MCF 10A (cell line): ENCODE measurements at regions of chr19 and their contacts with region 1.

Region 1: DNA sequence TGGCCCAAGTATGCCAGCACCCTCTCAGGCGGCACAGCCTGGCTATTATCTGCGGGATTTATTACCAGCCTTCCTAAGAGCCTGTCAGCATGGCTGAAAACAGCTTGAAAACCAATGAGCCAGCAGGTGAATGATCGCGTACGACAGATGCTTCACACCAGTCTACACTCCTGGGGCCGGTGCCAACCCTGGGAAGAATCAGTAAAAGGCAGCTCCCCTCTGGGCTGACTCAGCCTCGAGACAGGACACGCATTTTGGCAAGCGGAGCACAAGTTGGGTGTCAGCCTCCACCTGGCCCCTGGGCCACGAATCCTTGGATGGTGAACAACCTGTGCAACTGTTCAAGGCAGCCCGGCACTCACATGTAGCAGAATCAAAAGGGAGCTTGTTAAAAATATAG is 15.6 kb downstream of the EMP3 start:
- DNase-seq: peak; percentile 99
- H3K4me3 Mint-ChIP-seq: no peak overlapping the region
- H3K27ac Mint-ChIP-seq: no peak overlapping the region
- H3K4me1 Mint-ChIP-seq: peaks cover 15% of the 10 kb centered on the region
- H3K27me3 Mint-ChIP-seq: no peaks in the 10 kb centered on the region
- CTCF ChIP-seq: no peak

Region 2: GRCh38 chr19:48321622-48322591 is 19.1 kb before region 1 on chr19:
- CTCF ChIA-PET with region 1: interaction called, 7 read pairs
- POLR2A ChIA-PET with region 1: interaction called, 14 read pairs
- intact Hi-C with region 1: no loop called
- DNase-seq: peak; percentile 99
- H3K4me3 Mint-ChIP-seq: peak overlapping the region; percentile 95
- H3K27ac Mint-ChIP-seq: peak overlapping the region; percentile 97
- H3K4me1 Mint-ChIP-seq: peaks cover 43% of the 10 kb centered on the region
- H3K27me3 Mint-ChIP-seq: no peaks in the 10 kb centered on the region
- CTCF ChIP-seq: no peak

Region 3: DNA sequence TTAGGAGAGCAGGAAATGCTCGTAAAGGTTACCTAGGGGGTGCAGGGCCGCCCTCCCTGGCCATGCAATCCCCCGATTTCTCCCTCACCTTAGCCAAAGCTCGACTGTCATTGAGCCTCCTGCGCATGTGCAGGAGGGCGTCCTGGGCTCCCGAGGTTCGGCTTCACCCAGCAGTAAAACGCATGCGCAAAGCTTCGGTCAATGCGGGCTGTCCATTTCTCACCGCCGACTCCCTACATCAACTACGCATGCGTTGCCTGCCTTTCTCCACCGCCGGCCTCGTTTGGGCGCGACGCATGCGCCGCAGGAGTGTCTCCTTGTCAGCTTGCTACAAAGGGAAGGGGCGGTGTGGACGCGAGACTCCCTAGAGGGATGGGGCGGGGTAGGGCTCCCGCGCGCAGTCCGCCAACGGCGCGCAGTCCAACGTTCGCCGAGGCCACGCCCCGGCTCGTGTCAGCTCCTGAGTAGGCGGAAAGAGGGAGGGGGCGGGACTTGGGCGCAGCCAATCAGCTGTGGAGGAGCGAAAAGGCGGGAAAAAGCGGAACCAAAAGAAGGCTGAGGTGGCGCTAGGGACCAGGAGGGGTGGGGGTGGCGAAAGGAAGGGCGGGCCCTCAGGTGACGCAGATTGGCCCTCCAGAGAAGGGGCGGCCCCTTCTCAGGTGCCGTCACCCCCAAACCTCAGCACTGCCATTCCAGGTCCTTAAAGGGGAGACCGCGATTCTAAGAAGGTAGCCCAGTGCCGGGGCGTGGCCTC is 23.0 kb after region 1 on chr19 and contains the starts of genes SYNGR4 and TMEM143:
- CTCF ChIA-PET with region 1: interaction called, 3 read pairs
- POLR2A ChIA-PET with region 1: interaction called, 11 read pairs
- intact Hi-C with region 1: no loop called
- DNase-seq: peak; percentile 100
- H3K4me3 Mint-ChIP-seq: peak within 1 kb of the TSS; percentile 79
- H3K27ac Mint-ChIP-seq: peak within 1 kb of the TSS; percentile 88
- H3K4me1 Mint-ChIP-seq: no peaks in the 10 kb centered on the region
- H3K27me3 Mint-ChIP-seq: no peaks in the 10 kb centered on the region
- CTCF ChIP-seq: no peak
- total RNA-seq, gene SYNGR4: not detected in 2 replicates
- total RNA-seq, gene TMEM143: 6.0 and 7.6 TPM in 2 replicates